Aorta (tissue), 5 donors: ENCODE measurements at regions of chr12 and their contacts with region 1.

Region 1: DNA sequence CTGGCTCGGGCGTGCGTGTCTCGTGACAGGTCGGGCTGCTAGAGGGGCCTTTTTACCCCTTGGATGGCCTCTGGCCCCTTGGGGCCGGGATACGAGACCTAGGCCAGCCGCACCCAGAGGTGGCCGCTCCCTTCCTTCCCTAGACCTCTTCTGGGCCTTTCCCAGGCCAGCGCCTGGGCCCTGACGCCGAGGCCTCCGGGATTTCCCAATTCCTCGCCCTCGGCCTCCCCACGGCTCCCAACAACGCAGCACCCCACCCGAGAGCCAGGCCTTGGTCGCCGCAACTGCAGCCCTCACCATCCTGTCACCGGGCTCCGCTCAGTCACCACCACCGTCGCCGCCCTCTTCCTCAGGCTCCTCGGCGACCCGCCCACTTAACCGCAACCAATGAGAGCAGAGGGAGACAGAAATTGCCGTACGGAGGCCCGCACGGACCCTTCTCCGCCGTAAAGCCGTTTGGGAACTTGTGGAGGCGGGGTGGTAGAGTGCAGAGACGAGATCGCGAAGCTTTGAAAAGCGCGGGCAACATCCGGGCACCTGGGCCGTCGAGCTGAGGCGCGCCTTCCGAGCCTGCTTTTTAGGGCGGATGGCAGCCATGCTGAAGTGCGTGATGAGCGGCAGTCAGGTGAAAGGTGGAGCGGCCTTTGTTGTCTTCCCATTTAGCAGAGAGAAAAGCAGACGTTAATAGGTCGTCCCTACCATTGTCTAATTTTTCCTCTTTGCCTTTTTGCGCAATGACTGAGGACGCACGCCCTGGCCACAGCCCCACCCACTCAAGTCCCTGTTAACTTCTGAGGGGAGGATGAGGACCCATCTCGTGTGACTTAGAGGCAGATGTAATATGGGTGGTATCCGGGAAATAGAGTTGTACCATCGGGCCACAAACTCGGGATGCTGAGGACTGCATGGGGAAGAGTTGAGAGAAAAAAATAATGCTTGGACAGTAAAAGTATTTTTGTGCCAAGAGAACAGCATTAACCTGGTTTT is at the starts of genes RAD9B and VPS29:
- DNase-seq: peak; percentile 99
- ATAC-seq: peak; percentile 99
- H3K4me3 ChIP-seq: peak within 1 kb of the TSS; percentile 73 to 85
- H3K27ac ChIP-seq: peak within 1 kb of the TSS; percentile 69 to 87
- H3K4me1 ChIP-seq: peaks cover 0 to 6% of the 10 kb centered on the region in 2 donors
- H3K27me3 ChIP-seq: no peaks in the 10 kb centered on the region
- total RNA-seq, gene RAD9B: 0.57 to 2.2 TPM
- total RNA-seq, gene VPS29: 99.6 to 122 TPM

Region 2: DNA sequence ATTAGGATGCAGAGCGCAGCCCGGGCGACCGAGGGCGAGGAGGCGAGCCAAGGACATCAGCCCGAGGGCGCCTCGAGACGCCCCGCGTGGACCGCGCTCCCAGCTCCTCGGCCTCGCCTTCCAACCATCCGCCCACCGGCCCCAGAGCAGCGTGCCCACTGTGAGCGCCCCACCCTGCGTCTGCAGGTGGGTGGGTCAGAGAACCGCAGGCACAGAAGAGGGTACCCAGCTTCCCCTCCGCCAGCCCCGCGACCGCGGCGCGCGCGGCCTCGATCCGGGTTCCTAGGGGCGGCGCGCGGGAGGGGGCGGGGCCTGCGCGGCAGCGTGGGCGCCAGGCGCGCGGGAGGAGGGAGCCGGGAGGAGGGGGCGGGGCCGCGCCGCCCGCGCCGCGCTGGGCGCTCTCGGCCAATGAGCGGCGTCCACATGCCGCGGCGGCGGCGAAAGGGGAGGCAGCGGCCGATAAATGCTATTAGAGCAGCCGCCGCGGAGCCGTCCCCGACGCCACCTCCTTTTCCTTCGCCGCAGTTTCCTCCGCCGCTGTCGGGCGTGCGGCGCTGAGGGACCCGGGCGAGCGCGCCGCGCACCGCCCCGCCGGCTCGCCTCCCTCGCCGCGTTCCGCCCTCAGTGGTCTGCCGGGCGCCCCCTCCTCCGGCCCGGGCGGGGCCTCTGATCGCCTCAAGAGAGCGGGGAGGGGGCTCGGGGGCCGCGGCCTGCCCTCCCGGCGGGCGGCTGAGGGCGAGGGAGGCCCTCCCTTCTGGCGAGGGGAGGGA is 221.1 kb before region 1 on chr12 and contains the start of gene ATP2A2:
- intact Hi-C with region 1: no loop called
- DNase-seq: peak; percentile 94 to 95
- ATAC-seq: peak; percentile 97
- H3K4me3 ChIP-seq: peak within 1 kb of the TSS; percentile 83 to 96
- H3K27ac ChIP-seq: peak within 1 kb of the TSS; percentile 96 to 97
- H3K4me1 ChIP-seq: peaks cover 0 to 4% of the 10 kb centered on the region in 2 donors
- H3K27me3 ChIP-seq: no peaks in the 10 kb centered on the region
- total RNA-seq, gene ATP2A2: 231 to 285 TPM

Region 3: DNA sequence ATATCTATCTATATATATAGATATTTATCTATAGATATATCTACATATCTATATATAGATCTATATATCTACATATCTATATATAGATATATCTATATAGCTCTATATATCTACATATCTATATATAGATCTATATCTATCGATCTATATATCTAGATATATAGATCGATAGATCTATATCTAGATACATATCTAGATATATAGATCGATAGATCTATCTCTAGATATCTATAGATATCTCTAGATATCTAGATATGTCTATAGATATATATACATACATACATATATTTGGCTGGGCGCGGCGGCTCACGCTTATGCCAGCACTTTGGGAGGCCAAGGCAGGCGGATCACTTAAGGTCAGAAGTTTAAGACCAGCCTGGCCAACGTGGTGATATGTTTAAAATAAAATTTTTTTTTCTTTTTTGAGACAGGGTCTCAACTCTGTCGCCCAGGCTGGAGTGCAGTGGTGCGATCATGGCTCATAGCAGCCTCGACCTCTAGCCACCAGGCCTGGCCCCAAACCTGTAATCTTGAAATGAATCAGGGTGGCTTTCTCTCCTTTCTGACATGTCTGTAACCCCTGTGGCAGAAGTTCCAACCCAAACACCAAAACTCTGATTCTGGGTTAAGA is 70.0 kb before region 1 on chr12:
- intact Hi-C with region 1: no loop called
- DNase-seq: no peak
- ATAC-seq: no peak
- H3K4me3 ChIP-seq: no peak overlapping the region
- H3K27ac ChIP-seq: no peak overlapping the region
- H3K4me1 ChIP-seq: no peaks in the 10 kb centered on the region
- H3K27me3 ChIP-seq: no peaks in the 10 kb centered on the region

Region 4: DNA sequence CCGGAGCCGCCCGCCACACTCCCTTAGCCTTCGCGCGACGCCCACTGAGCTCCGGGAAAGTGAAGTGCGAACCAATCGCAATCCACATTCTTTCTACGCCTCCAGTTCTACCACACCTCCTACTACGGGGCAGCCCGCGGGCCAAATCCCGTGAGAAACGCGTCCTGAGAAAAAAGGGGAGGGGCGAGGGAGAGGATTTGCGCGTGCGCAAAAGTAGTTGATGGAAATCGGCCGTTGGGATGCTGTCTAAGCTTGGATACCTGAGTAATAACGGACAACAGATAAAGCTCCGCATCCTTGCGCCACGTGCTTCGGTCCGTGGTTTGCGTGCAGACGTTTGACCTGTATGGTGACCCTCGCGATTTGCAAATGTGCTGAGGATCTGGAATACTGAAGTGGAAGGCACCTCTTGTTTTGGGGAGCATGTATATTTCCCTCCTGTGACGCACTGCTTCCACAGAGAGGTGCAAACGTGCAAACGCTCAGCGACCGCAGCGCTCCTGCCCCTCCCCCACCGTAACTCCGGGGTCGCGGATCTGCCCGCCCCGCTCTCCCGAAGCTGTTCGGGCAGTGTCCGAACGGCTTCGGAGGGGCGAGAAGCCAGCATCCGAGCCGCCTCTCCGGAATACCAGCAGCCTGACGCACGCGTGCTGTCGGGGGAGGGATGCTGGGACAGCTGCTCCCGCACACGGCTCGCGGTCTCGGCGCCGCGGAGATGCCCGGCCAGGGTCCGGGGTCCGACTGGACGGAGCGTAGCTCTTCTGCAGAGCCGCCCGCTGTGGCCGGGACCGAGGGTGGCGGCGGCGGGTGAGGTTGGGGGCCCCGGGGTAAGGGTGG is 33.6 kb before region 1 on chr12 and contains the starts of genes FAM216A and GPN3:
- intact Hi-C with region 1: loop called (anchors 2 to 5 kb)
- DNase-seq: peak; percentile 97 to 98
- ATAC-seq: peak; percentile 96
- H3K4me3 ChIP-seq: peak within 1 kb of the TSS; percentile 66 to 86
- H3K27ac ChIP-seq: peak within 1 kb of the TSS; percentile 5 to 68
- H3K4me1 ChIP-seq: no peaks in the 10 kb centered on the region
- H3K27me3 ChIP-seq: no peaks in the 10 kb centered on the region
- total RNA-seq, gene FAM216A: 6.6 to 7.1 TPM
- total RNA-seq, gene GPN3: 14.5 to 20.6 TPM

Region 5: GRCh38 chr12:110563702-110564640 is 61.9 kb after region 1 on chr12:
- intact Hi-C with region 1: no loop called
- DNase-seq: no peak
- ATAC-seq: no peak
- H3K4me3 ChIP-seq: no peak overlapping the region
- H3K27ac ChIP-seq: no peak overlapping the region
- H3K4me1 ChIP-seq: peaks cover 0 to 1% of the 10 kb centered on the region in 2 donors
- H3K27me3 ChIP-seq: no peaks in the 10 kb centered on the region

Region 6: GRCh38 chr12:110641521-110641920 is 139.5 kb after region 1 on chr12:
- intact Hi-C with region 1: no loop called
- DNase-seq: no peak
- ATAC-seq: peak; percentile 49
- H3K4me3 ChIP-seq: no peak overlapping the region
- H3K27ac ChIP-seq: no peak overlapping the region
- H3K4me1 ChIP-seq: peaks cover 0 to 2% of the 10 kb centered on the region in 2 donors
- H3K27me3 ChIP-seq: no peaks in the 10 kb centered on the region